ENCODE measurements at regions of chr9 and their contacts with region 1.

Region 1: GRCh38 chr9:71795097-71795813 is 26.9 kb upstream of the CEMIP2 start:
- DNase-seq: no peak
- H3K4me3 ChIP-seq: no peak overlapping the region
- H3K27ac ChIP-seq: no peak overlapping the region
- H3K4me1 ChIP-seq: no peaks in the 10 kb centered on the region
- H3K27me3 ChIP-seq: no peaks in the 10 kb centered on the region
- CTCF ChIP-seq: no peak
- POLR2A ChIP-seq: no peak

Region 2: DNA sequence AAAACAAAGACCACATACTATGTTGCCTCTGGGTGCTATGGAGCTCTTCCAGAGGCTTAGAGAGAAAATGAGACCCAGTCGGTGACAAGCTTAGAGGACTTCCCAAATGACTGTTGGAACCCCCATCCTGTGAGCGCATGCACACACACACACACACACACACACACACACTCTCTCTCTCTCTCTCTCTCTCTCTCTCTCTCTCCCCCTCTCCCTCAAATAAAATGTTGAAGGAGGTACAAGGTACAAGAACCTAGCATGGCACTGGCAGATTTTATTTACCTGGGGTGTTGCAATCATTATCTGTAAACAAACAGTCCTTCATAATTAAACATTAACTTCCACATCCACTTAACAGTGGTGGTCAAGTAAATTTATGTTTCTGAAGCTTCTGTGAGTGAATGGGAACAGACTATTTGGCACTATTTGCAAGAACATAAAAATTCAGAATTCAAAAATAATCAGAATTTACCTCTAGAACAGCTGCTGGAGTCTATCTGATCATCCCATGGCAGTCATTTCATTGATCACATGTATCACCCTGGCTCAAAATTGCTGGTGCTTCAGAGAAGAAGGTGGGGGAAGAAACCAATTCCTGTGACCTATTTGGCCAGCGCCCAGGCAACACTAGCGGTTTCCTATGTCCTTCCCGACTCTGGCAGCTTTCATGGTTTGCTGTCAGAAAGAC is 698.7 kb before region 1 on chr9:
- CTCF ChIA-PET with region 1: no interaction called
- POLR2A ChIA-PET with region 1: no interaction called
- dilution Hi-C with region 1: no loop called
- intact Hi-C with region 1: no loop called
- DNase-seq: no peak
- H3K4me3 ChIP-seq: no peak overlapping the region
- H3K27ac ChIP-seq: no peak overlapping the region
- H3K4me1 ChIP-seq: no peaks in the 10 kb centered on the region
- H3K27me3 ChIP-seq: no peaks in the 10 kb centered on the region
- CTCF ChIP-seq: no peak
- POLR2A ChIP-seq: no peak

Region 3: DNA sequence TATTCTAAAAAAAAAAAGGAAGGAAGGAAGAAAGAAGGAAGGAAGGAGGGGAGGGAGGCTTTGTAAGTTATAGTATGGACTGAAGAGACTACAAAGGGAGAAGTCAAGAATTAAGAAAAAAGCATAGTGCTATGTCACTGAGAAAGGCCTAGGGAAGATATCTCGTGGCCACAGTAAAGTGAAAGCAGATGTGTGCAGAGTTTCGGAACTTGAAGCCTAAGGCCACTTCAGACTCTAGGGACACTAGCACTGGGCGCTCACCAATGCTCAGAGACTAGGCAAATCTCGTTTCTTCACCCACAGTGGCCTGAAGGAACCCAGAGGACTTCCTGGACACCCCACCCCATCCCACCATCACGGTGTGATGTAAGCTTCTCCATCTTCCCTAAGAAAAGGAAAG is 492.5 kb before region 1 on chr9:
- CTCF ChIA-PET with region 1: no interaction called
- POLR2A ChIA-PET with region 1: interaction called, 10 read pairs
- dilution Hi-C with region 1: no loop called
- intact Hi-C with region 1: no loop called
- DNase-seq: no peak
- H3K4me3 ChIP-seq: no peak overlapping the region
- H3K27ac ChIP-seq: no peak overlapping the region
- H3K4me1 ChIP-seq: no peaks in the 10 kb centered on the region
- H3K27me3 ChIP-seq: no peaks in the 10 kb centered on the region
- CTCF ChIP-seq: no peak
- POLR2A ChIP-seq: no peak

Region 4: DNA sequence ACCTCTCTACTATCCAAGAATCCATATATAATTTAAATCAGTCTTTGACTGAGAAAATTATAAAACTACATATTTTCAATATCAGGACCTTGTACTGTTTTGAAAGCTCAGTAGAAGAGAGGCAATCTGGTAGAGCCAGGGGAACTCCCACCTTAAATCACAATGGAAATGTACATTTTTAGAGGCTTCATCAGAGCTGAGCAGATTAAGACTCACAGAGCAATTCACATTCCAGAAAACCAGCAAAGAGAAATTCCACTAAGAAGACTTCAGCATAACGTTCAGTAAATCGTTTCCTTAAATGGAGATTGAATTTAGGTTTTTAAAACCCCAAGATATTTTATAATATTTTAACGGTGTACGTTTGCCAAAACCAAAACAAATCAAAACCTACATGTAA is 446.0 kb before region 1 on chr9:
- CTCF ChIA-PET with region 1: no interaction called
- POLR2A ChIA-PET with region 1: no interaction called
- dilution Hi-C with region 1: no loop called
- intact Hi-C with region 1: no loop called
- DNase-seq: no peak
- H3K4me3 ChIP-seq: no peak overlapping the region
- H3K27ac ChIP-seq: no peak overlapping the region
- H3K4me1 ChIP-seq: no peaks in the 10 kb centered on the region
- H3K27me3 ChIP-seq: no peaks in the 10 kb centered on the region
- CTCF ChIP-seq: no peak
- POLR2A ChIP-seq: no peak

Region 5: DNA sequence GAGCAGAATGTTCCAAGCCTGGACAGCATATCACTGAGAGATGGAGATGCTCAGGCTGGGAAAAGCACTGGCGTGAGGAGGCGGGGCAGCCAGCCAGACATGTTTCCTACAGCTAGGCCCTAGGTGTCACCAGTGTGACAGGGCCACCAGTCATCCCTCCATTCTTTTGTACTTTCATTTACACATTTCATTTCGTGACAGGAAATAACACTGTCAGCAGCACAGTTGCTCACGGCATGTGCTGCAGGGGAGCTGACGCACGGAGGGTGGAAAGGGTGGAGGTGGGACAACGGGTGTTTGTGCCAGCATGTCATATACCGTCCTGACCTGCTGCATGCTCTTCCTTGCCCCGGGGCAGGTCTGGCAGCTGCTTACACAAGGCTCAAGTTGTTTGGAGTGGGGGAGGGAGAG is 12.1 kb before region 1 on chr9:
- CTCF ChIA-PET with region 1: no interaction called
- POLR2A ChIA-PET with region 1: no interaction called
- dilution Hi-C with region 1: no loop called
- intact Hi-C with region 1: no loop called
- DNase-seq: no peak
- H3K4me3 ChIP-seq: no peak overlapping the region
- H3K27ac ChIP-seq: no peak overlapping the region
- H3K4me1 ChIP-seq: no peaks in the 10 kb centered on the region
- H3K27me3 ChIP-seq: no peaks in the 10 kb centered on the region
- CTCF ChIP-seq: no peak
- POLR2A ChIP-seq: no peak